ENCODE measurements at regions of chr17 and their contacts with region 1.

Region 1: GRCh38 chr17:65314212-65314611 is 177.0 kb downstream of the RGS9 start:
- DNase-seq: no peak

Region 2: DNA sequence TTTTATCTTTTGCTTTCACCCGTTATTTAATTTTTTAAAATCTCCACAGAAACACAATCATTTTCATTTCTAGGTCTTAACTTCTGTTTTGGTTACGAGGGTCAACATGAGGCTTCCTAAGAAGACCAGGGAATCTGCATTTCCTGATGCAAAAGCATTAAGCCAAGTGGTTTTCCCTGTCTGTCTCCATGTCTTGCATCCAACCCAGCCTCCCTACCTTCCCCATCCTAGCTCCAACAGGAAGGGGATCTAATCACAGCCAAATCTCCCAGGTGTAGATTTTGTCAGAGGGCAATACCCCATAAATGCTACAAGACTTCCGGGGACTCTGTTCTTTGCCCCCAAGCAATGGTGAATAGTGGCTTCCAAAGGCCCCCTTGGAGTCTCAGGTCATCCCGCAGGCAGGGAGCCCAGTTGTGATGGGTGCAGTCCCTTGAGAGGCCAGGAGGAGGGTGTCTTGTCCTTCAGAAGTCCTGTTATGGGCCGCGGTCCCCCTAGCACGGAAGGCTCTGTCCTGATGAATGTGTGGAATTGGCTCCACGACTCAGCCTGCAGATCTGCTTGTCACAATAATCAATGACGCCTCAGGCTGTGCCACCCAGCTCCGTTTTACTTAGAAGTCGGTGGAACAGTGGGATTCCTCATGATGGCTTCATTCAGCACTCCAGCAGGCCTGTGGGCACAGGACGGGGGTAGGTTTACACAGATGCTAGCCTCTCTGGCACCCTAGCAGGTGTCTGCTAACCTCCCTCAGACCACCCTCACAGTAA is 36.0 kb before region 1 on chr17:
- CTCF ChIA-PET with region 1: no interaction called
- POLR2A ChIA-PET with region 1: no interaction called
- DNase-seq: peak; percentile 82

Region 3: GRCh38 chr17:65294179-65294720 is 20.0 kb before region 1 on chr17:
- CTCF ChIA-PET with region 1: interaction called, 13 read pairs
- POLR2A ChIA-PET with region 1: no interaction called
- DNase-seq: peak; percentile 86

Measured in HEK293T (cell line).